ENCODE measurements at regions of chr6 and their contacts with region 1.

Region 1: DNA sequence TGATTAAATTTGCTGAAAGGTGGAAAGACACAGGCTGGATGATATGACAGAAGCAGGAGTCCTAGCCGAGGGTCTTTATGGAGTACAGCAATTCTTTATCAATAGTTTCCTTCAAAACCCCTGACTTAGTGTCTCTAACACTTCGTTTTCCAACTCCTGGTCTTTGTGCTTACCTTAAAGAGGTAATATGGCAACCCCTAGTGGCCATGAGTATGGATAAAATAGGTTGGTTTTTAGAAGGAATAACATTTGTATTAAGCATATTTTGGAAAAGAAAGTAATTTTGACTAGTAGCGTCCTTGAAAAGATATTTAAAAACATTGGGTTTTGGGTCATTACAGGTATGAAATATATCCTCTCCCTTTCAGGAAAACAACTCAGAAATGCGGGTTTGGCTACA is 51.9 kb downstream of the VGLL2 start:
- DNase-seq: peak; percentile 10
- H3K4me3 Mint-ChIP-seq: no peak overlapping the region
- H3K27ac Mint-ChIP-seq: no peak overlapping the region
- H3K4me1 Mint-ChIP-seq: no peaks in the 10 kb centered on the region
- H3K27me3 Mint-ChIP-seq: no peaks in the 10 kb centered on the region
- CTCF ChIP-seq: peak; percentile 36

Region 2: GRCh38 chr6:116773886-116774285 is 543.4 kb before region 1 on chr6:
- CTCF ChIA-PET with region 1: no interaction called
- intact Hi-C with region 1: loop called (anchors 5 kb)
- DNase-seq: no peak
- H3K4me3 Mint-ChIP-seq: no peak overlapping the region
- H3K27ac Mint-ChIP-seq: no peak overlapping the region
- H3K4me1 Mint-ChIP-seq: no peaks in the 10 kb centered on the region
- H3K27me3 Mint-ChIP-seq: no peaks in the 10 kb centered on the region
- CTCF ChIP-seq: no peak

Region 3: GRCh38 chr6:116779573-116780164 is 537.6 kb before region 1 on chr6:
- CTCF ChIA-PET with region 1: no interaction called
- intact Hi-C with region 1: loop called (anchors 5 kb)
- DNase-seq: peak; percentile 2
- H3K4me3 Mint-ChIP-seq: no peak overlapping the region
- H3K27ac Mint-ChIP-seq: no peak overlapping the region
- H3K4me1 Mint-ChIP-seq: no peaks in the 10 kb centered on the region
- H3K27me3 Mint-ChIP-seq: no peaks in the 10 kb centered on the region
- CTCF ChIP-seq: no peak

Region 4: GRCh38 chr6:116881236-116881635 is 436.0 kb before region 1 on chr6:
- CTCF ChIA-PET with region 1: no interaction called
- intact Hi-C with region 1: loop called (anchors 5 kb)
- DNase-seq: no peak
- H3K4me3 Mint-ChIP-seq: no peak overlapping the region
- H3K27ac Mint-ChIP-seq: no peak overlapping the region
- H3K4me1 Mint-ChIP-seq: no peaks in the 10 kb centered on the region
- H3K27me3 Mint-ChIP-seq: peaks cover 7% of the 10 kb centered on the region
- CTCF ChIP-seq: no peak

Region 5: GRCh38 chr6:117167520-117168271 is 149.6 kb before region 1 on chr6:
- CTCF ChIA-PET with region 1: no interaction called
- intact Hi-C with region 1: loop called (anchors 5 kb)
- DNase-seq: peak; percentile 81
- H3K4me3 Mint-ChIP-seq: peak overlapping the region; percentile 46
- H3K27ac Mint-ChIP-seq: peak overlapping the region; percentile 82
- H3K4me1 Mint-ChIP-seq: peaks cover 45% of the 10 kb centered on the region
- H3K27me3 Mint-ChIP-seq: no peaks in the 10 kb centered on the region
- CTCF ChIP-seq: no peak

Region 6: DNA sequence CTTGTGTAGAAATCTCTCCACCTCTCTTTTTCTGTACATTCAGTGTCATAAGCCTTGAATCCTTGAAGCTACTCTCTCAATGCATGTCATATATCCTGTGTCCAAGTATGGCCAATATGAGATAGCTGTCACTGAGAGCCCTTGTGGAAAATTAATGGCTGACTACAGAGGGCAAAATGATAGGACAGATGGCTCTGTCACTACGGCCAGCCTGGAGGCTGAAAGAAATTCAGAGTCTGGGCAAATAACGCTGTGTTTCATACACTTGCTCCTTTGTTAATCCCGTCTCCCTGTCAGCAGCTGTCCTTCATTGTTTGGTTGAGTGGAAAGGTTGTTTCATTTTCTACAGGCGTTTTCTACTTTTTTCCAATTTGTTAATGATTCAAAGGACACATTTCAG is 122.3 kb before region 1 on chr6:
- CTCF ChIA-PET with region 1: no interaction called
- intact Hi-C with region 1: loop called (anchors 10 kb)
- DNase-seq: no peak
- H3K4me3 Mint-ChIP-seq: no peak overlapping the region
- H3K27ac Mint-ChIP-seq: no peak overlapping the region
- H3K4me1 Mint-ChIP-seq: peaks cover 25% of the 10 kb centered on the region
- H3K27me3 Mint-ChIP-seq: no peaks in the 10 kb centered on the region
- CTCF ChIP-seq: no peak

Region 7: DNA sequence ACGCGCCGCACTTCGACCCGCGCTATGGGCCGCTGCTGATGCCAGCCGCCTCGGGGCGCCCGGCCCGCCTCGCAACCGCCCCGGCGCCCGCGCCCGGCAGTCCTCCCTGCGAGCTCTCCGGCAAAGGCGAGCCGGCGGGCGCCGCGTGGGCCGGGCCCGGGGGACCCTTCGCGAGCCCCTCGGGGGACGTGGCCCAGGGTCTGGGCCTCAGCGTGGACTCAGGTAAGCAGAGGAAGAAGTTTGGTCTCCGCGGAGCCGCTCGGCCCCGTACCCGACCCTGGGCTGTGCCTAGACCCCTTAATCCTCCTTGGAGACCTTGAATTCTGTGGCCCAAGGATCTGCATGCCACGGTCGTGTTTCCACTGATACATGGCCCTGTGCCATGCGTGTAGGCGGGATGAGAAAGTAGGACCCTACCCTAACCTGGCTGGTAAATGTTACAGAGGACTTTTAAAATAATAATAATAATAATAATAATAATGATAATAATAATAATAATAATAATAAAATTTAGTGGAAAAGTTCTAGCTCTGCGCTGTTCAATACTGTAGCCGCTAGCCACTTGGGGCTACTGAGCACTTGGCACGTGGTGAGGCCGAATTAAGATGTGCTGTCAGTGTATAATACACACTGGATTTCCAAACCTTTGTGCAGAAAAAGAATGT is 46.3 kb before region 1 on chr6:
- CTCF ChIA-PET with region 1: no interaction called
- intact Hi-C with region 1: no loop called
- DNase-seq: no peak
- H3K4me3 Mint-ChIP-seq: peak overlapping the region; percentile 60
- H3K27ac Mint-ChIP-seq: no peak overlapping the region
- H3K4me1 Mint-ChIP-seq: no peaks in the 10 kb centered on the region
- H3K27me3 Mint-ChIP-seq: peaks cover 93% of the 10 kb centered on the region
- CTCF ChIP-seq: no peak